CD8-positive, alpha-beta memory T cell (primary cell): ENCODE measurements at regions of chr5 and their contacts with region 1.

Region 1: GRCh38 chr5:95846554-95847260 is 24.2 kb upstream of the GLRX start:
- DNase-seq: peak; percentile 48 to 77 (median 64)
- H3K4me3 ChIP-seq: no peak overlapping the region
- H3K4me3 Mint-ChIP-seq: no peak overlapping the region
- H3K27ac ChIP-seq: no peak overlapping the region
- H3K27ac Mint-ChIP-seq: peak overlapping the region in 2 of 8 donors; percentile 27 to 60
- H3K4me1 ChIP-seq: peaks cover 10% of the 10 kb centered on the region
- H3K4me1 Mint-ChIP-seq: peaks cover 12 to 13% (median 13%) of the 10 kb centered on the region in 3 donors
- H3K27me3 ChIP-seq: no peaks in the 10 kb centered on the region
- H3K27me3 Mint-ChIP-seq: no peaks in the 10 kb centered on the region

Region 2: DNA sequence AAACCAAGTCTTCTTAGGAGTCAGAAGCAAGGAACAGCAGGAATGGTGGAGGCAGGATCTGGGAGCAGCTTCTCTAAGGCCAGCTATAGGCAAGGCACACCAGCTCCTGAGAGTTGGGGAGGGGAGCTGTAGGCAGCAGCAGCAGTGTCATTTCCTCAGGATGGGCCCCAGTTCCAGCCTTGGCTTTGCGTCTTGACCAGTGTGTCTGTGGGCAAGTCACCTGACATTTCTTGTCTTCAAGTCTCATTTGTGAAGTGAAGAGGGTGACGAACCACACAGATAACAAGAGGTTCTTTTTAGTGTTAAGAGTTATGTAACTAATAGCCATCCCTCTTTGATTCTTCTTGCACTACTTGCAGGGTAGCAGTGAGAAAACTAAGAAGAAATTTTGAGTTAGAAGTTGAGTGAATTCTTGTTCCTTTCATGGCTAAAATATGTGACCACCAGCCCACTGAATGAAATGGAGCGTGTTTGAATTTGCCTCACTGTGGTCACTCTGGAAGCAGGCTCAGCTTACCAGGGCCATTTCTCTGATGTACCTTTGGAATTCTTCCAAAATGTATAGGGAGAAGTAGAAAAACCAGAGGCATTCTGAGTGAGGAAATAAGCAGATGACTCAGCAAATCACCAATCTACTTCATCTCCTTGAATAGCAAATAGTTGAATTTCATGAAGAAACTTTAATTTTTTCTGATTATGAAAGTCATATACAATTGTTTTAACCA is 73.2 kb before region 1 on chr5:
- CTCF ChIA-PET with region 1: interaction called, 93 read pairs
- POLR2A ChIA-PET with region 1: interaction called, 4 read pairs
- DNase-seq: no peak
- H3K4me3 ChIP-seq: no peak overlapping the region
- H3K4me3 Mint-ChIP-seq: no peak overlapping the region
- H3K27ac ChIP-seq: no peak overlapping the region
- H3K27ac Mint-ChIP-seq: peak overlapping the region in 1 of 8 donors; percentile 64
- H3K4me1 ChIP-seq: no peaks in the 10 kb centered on the region
- H3K4me1 Mint-ChIP-seq: peaks cover 0 to 5% (median 0%) of the 10 kb centered on the region in 3 donors
- H3K27me3 ChIP-seq: no peaks in the 10 kb centered on the region
- H3K27me3 Mint-ChIP-seq: peaks cover 0 to 2% of the 10 kb centered on the region in 2 donors

Region 3: GRCh38 chr5:95808686-95809413 is 37.9 kb before region 1 on chr5:
- CTCF ChIA-PET with region 1: interaction called, 10 read pairs
- POLR2A ChIA-PET with region 1: interaction called, 7 read pairs
- DNase-seq: peak; percentile 67 to 90 (median 86)
- H3K4me3 ChIP-seq: peak overlapping the region; percentile 31
- H3K4me3 Mint-ChIP-seq: peak overlapping the region; percentile 20 to 82 (median 71)
- H3K27ac ChIP-seq: peak overlapping the region; percentile 4
- H3K27ac Mint-ChIP-seq: peak overlapping the region; percentile 65 to 96 (median 87)
- H3K4me1 ChIP-seq: peaks cover 57% of the 10 kb centered on the region
- H3K4me1 Mint-ChIP-seq: peaks cover 60 to 65% (median 61%) of the 10 kb centered on the region in 3 donors
- H3K27me3 ChIP-seq: no peaks in the 10 kb centered on the region
- H3K27me3 Mint-ChIP-seq: no peaks in the 10 kb centered on the region

Region 4: GRCh38 chr5:95822542-95823181 is 24.0 kb before region 1 on chr5 and contains the start of gene GLRX:
- CTCF ChIA-PET with region 1: interaction called, 105 read pairs
- POLR2A ChIA-PET with region 1: interaction called, 3 read pairs
- DNase-seq: peak; percentile 45 to 70 (median 59)
- H3K4me3 ChIP-seq: peak within 1 kb of the TSS; percentile 96
- H3K4me3 Mint-ChIP-seq: peak within 1 kb of the TSS; percentile 97 to 100 (median 99)
- H3K27ac ChIP-seq: peak within 1 kb of the TSS; percentile 25
- H3K27ac Mint-ChIP-seq: peak within 1 kb of the TSS; percentile 65 to 100 (median 94)
- H3K4me1 ChIP-seq: peaks cover 49% of the 10 kb centered on the region
- H3K4me1 Mint-ChIP-seq: peaks cover 58 to 71% (median 63%) of the 10 kb centered on the region in 3 donors
- H3K27me3 ChIP-seq: no peaks in the 10 kb centered on the region
- H3K27me3 Mint-ChIP-seq: no peaks in the 10 kb centered on the region
- total RNA-seq, gene GLRX: 22.2 to 25.0 TPM

Region 5: DNA sequence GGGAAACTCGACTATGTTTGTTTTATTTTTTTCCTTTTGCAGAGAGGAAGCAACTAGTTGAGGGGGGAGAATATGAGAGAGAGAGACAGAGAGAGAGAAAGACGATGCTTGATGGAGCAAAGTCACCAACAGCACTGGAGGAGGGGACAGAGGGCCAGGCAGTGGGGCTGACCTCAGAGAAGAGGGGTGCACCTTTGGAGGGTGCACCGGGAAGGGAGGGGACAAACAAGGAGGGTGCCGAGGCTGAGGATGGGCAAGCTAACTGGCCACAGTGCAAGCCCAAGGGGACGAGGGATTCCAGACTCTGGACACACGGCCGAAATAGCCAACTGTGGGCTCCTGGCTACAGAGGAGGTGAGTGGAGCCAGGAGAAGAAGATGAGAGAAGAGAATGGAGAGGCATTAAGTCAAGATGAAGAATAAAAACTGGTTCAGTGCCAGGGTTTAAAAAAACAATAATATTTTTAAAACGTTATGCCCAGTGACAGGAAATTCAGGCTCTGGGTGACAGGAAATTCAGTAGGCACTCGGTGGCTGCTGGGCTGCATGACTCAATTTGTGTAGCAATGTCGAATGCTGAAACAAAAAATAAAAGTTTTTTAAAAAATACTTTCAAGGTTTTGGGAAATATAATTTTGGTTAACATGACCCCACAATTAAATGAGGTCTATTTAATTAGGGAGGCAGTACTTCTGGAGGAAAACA is 10.9 kb before region 1 on chr5:
- CTCF ChIA-PET with region 1: interaction called, 17 read pairs
- POLR2A ChIA-PET with region 1: no interaction called
- DNase-seq: peak in 2 of 5 donors; percentile 37 to 57
- H3K4me3 ChIP-seq: peak overlapping the region; percentile 61
- H3K4me3 Mint-ChIP-seq: peak overlapping the region; percentile 82 to 96 (median 87)
- H3K27ac ChIP-seq: peak overlapping the region; percentile 49
- H3K27ac Mint-ChIP-seq: peak overlapping the region; percentile 76 to 98 (median 94)
- H3K4me1 ChIP-seq: peaks cover 33% of the 10 kb centered on the region
- H3K4me1 Mint-ChIP-seq: peaks cover 42 to 51% (median 47%) of the 10 kb centered on the region in 3 donors
- H3K27me3 ChIP-seq: no peaks in the 10 kb centered on the region
- H3K27me3 Mint-ChIP-seq: no peaks in the 10 kb centered on the region

Region 6: GRCh38 chr5:96336351-96336985 is 489.8 kb after region 1 on chr5:
- CTCF ChIA-PET with region 1: interaction called, 33 read pairs
- POLR2A ChIA-PET with region 1: no interaction called
- DNase-seq: peak; percentile 20 to 57 (median 51)
- H3K4me3 ChIP-seq: no peak overlapping the region
- H3K4me3 Mint-ChIP-seq: no peak overlapping the region
- H3K27ac ChIP-seq: no peak overlapping the region
- H3K27ac Mint-ChIP-seq: no peak overlapping the region
- H3K4me1 ChIP-seq: no peaks in the 10 kb centered on the region
- H3K4me1 Mint-ChIP-seq: no peaks in the 10 kb centered on the region
- H3K27me3 ChIP-seq: no peaks in the 10 kb centered on the region
- H3K27me3 Mint-ChIP-seq: peaks cover 5 to 27% of the 10 kb centered on the region in 2 donors